ENCODE measurements at regions of chr7 and their contacts with region 1.

Region 1: GRCh38 chr7:80500325-80500724 is 11.5 kb downstream of the GNAT3 start:
- DNase-seq: no peak
- ATAC-seq: no peak
- H3K4me3 ChIP-seq: no peak overlapping the region
- H3K4me3 Mint-ChIP-seq: no peak overlapping the region
- H3K27ac ChIP-seq: no peak overlapping the region
- H3K27ac Mint-ChIP-seq: no peak overlapping the region
- H3K4me1 ChIP-seq: no peaks in the 10 kb centered on the region
- H3K4me1 Mint-ChIP-seq: no peaks in the 10 kb centered on the region
- H3K27me3 ChIP-seq: no peaks in the 10 kb centered on the region
- H3K27me3 Mint-ChIP-seq: peaks cover 2% of the 10 kb centered on the region
- CTCF ChIP-seq: no peak

Region 2: GRCh38 chr7:80533287-80533686 is 33.0 kb after region 1 on chr7:
- CTCF ChIA-PET with region 1: no interaction called
- POLR2A ChIA-PET with region 1: no interaction called
- intact Hi-C with region 1: no loop called
- DNase-seq: no peak
- ATAC-seq: no peak
- H3K4me3 ChIP-seq: no peak overlapping the region
- H3K4me3 Mint-ChIP-seq: no peak overlapping the region
- H3K27ac ChIP-seq: no peak overlapping the region
- H3K27ac Mint-ChIP-seq: no peak overlapping the region
- H3K4me1 ChIP-seq: no peaks in the 10 kb centered on the region
- H3K4me1 Mint-ChIP-seq: no peaks in the 10 kb centered on the region
- H3K27me3 ChIP-seq: no peaks in the 10 kb centered on the region
- H3K27me3 Mint-ChIP-seq: no peaks in the 10 kb centered on the region
- CTCF ChIP-seq: no peak

Region 3: DNA sequence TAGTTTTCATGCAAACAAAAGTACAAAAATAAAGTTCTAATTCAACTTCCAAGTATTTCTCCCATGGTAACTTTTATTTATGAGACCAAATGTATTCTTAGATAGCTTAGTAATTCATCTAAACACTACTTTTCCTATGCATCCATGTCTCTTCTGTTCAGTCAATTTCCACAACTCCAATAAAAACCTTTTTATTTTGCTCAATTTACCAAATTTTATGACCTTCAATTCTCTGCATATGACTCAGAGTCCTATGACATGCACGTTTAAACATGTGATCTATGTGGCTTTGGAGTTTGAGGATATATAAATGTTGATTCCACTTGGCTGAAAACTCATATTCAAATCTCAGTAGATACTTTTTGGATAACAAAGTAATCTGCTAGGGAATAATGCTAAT is 52.0 kb after region 1 on chr7:
- CTCF ChIA-PET with region 1: no interaction called
- POLR2A ChIA-PET with region 1: no interaction called
- intact Hi-C with region 1: loop called in 1 of 2 experiments (anchors 5 kb)
- DNase-seq: no peak
- ATAC-seq: no peak
- H3K4me3 ChIP-seq: no peak overlapping the region
- H3K4me3 Mint-ChIP-seq: no peak overlapping the region
- H3K27ac ChIP-seq: no peak overlapping the region
- H3K27ac Mint-ChIP-seq: no peak overlapping the region
- H3K4me1 ChIP-seq: no peaks in the 10 kb centered on the region
- H3K4me1 Mint-ChIP-seq: no peaks in the 10 kb centered on the region
- H3K27me3 ChIP-seq: no peaks in the 10 kb centered on the region
- H3K27me3 Mint-ChIP-seq: no peaks in the 10 kb centered on the region
- CTCF ChIP-seq: no peak

Region 4: DNA sequence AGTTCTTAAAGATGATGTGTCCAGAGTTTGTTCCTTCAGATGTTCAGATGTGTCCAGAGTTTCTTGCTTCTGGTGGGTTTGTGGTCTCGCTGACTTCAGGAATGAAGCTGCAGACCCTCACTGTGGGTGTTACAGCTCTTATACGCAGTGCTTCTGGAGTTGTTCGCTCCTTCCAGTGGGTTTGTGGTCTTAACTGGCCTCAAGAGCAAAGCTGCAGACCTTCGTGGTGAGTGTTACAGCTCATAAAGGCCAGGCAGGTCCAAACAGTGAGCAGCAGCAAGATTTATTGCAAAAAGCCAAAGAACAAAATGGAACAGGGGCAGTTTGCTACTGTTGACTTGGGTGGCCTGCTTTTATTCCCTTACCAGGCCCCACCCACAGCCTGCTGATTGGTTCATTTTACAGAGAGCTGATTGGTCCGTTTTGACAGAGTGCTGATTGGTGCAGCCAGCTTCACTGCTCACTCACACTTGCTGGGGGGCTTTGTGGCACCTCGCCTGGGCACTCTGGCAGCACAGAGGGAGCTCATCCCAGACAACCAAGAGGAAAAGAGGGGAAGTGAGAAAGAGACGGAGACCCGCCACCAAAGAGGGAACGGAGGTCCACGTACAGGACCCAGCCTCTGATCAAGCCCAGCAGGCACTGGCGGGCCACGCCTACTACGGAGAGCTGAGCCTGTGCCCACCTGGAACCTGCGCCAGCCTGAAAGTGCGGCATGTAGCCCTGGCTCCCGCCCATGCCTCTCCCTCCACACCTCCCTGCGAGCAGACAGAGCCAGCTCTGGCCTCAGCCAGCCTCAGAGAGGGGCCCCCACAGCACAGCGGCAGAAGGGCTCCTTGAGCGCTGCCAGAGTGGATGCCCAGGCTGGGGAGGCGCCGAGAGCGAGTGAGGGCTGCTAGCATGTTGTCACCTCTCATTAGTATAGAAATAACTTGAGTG is 474.3 kb after region 1 on chr7:
- CTCF ChIA-PET with region 1: no interaction called
- POLR2A ChIA-PET with region 1: no interaction called
- intact Hi-C with region 1: no loop called
- DNase-seq: peak in 1 of 9 experiments; percentile 0
- ATAC-seq: no peak
- H3K4me3 ChIP-seq: no peak overlapping the region
- H3K4me3 Mint-ChIP-seq: no peak overlapping the region
- H3K27ac ChIP-seq: no peak overlapping the region
- H3K27ac Mint-ChIP-seq: no peak overlapping the region
- H3K4me1 ChIP-seq: no peaks in the 10 kb centered on the region
- H3K4me1 Mint-ChIP-seq: no peaks in the 10 kb centered on the region
- H3K27me3 ChIP-seq: no peaks in the 10 kb centered on the region
- H3K27me3 Mint-ChIP-seq: no peaks in the 10 kb centered on the region
- CTCF ChIP-seq: no peak

Measured in CD8-positive, alpha-beta T cell (primary cell).